Keratinocyte (primary cell): ENCODE measurements at regions of chrX and their contacts with region 1.

Region 1: DNA sequence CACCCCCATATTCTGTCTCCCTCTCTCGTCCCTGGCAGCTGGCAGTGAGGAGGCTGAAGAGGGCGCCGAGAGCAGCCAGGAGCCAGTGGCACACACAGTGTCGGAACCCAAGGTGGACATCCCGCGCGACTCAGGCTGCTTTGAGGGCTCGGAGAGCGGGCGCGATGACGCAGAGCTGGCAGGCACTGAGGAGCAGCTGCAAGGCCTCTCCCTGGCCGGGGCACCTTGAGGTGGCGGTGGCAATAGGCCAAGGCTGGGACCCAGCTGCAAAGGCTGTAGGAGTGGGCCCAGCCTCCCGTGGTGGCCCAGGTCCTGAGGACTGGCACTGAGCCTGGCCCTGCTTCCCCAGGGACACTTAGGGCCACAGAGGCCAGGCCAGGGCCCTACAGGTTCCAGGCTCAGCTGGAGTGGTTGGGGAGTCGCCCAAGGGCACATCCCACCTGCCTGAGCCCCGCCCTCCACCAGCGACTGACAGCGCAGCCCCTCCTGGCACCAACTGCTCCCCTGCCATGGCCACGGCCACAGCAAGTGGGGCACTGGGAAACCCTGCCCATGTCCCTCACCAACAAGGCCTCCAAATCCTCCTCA is 13.9 kb downstream of the SASH3 start:
- DNase-seq: no peak
- H3K4me3 ChIP-seq: no peak overlapping the region
- H3K27ac ChIP-seq: no peak overlapping the region
- H3K4me1 ChIP-seq: no peaks in the 10 kb centered on the region
- H3K27me3 ChIP-seq: no peaks in the 10 kb centered on the region
- CTCF ChIP-seq: no peak

Region 2: GRCh38 chrX:129748305-129748704 is 45.4 kb before region 1 on chrX:
- dilution Hi-C with region 1: loop called (anchors 10 kb)
- DNase-seq: no peak
- H3K4me3 ChIP-seq: no peak overlapping the region
- H3K27ac ChIP-seq: no peak overlapping the region
- H3K4me1 ChIP-seq: no peaks in the 10 kb centered on the region
- H3K27me3 ChIP-seq: peaks cover 11% of the 10 kb centered on the region
- CTCF ChIP-seq: no peak

Region 3: DNA sequence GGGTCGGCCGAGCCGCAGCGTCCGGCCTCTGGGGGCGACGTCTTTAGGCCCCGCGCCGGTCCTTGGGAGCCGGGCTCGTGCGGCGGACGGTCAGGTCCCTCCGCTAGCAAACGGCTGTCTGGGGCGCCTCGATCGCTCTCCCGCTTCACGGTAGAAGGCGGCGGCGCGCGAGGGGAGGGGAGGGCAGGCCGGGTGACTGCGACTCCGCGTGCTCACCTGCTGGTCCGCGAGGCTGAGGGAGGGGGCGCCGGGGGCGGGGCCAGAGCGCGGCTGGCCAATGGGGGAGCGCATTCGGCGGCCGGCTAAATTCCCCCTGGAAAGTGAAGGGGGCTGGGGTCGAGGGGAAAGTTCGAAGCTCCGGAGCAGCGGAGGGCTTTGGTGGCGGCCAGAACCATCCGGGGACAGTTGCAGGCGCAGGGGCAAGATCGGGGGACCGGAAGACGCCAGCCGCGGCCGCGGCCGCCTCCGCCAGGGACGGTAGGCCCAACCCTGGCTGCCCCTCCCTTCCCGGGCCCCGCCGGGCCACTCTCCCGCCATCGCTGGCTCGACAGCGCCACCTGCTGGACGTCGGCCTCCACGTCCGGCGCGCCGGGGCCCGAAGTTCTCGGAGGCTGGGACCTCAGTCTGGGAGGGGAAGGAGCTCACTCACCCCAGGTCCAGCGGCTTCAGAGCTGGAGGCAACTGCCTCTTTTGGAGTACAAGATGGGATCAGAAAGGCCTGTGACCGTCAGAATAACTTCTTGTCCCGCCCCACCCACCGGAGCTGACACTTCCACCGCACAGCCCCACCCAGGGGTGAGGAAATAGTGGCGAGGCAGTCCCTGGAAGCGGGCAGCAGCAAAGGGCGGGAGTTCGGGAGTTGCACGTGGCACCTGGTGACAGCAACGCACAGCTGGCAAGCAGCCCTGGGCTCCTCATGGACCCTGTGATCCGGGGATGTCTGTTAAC is 266.7 kb after region 1 on chrX:
- dilution Hi-C with region 1: no loop called
- DNase-seq: no peak
- H3K4me3 ChIP-seq: peak overlapping the region; percentile 32 to 49 (median 44)
- H3K27ac ChIP-seq: peak overlapping the region; percentile 8
- H3K4me1 ChIP-seq: peaks cover 3% of the 10 kb centered on the region
- H3K27me3 ChIP-seq: no peaks in the 10 kb centered on the region
- CTCF ChIP-seq: peak; percentile 48 to 83 (median 74)